Calu3 (cell line): ENCODE measurements at regions of chr2 and their contacts with region 1.

Region 1: GRCh38 chr2:193712912-193713311 is 1518.2 kb upstream of the TMEFF2 start:
- DNase-seq: no peak
- H3K4me3 Mint-ChIP-seq: no peak overlapping the region
- H3K27ac Mint-ChIP-seq: no peak overlapping the region
- H3K4me1 Mint-ChIP-seq: no peaks in the 10 kb centered on the region
- H3K27me3 Mint-ChIP-seq: no peaks in the 10 kb centered on the region
- CTCF ChIP-seq: no peak

Region 2: GRCh38 chr2:193584522-193584938 is 128.4 kb before region 1 on chr2:
- CTCF ChIA-PET with region 1: no interaction called
- intact Hi-C with region 1: no loop called
- DNase-seq: peak; percentile 15
- H3K4me3 Mint-ChIP-seq: no peak overlapping the region
- H3K27ac Mint-ChIP-seq: no peak overlapping the region
- H3K4me1 Mint-ChIP-seq: peaks cover 37% of the 10 kb centered on the region
- H3K27me3 Mint-ChIP-seq: no peaks in the 10 kb centered on the region
- CTCF ChIP-seq: peak; percentile 52

Region 3: DNA sequence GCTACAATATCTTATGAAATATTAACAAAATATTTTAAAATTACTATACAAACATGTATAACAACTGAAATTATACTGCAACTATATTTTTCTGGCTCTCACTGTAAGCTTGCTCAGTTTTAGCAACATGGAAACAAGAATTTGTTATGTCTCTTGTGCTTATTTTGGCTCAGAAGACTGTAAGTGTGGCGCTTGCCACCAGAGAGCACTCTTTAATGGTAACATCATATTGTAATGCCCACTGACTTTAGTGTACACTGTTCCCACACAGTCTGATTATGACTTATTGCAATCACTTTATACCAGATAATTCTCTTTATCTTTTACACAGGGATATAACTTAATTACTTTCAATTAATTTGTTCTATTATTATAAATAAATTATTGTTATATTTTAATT is 17.5 kb before region 1 on chr2:
- CTCF ChIA-PET with region 1: no interaction called
- intact Hi-C with region 1: no loop called
- DNase-seq: peak; percentile 19
- H3K4me3 Mint-ChIP-seq: no peak overlapping the region
- H3K27ac Mint-ChIP-seq: no peak overlapping the region
- H3K4me1 Mint-ChIP-seq: no peaks in the 10 kb centered on the region
- H3K27me3 Mint-ChIP-seq: no peaks in the 10 kb centered on the region
- CTCF ChIP-seq: peak; percentile 29

Region 4: DNA sequence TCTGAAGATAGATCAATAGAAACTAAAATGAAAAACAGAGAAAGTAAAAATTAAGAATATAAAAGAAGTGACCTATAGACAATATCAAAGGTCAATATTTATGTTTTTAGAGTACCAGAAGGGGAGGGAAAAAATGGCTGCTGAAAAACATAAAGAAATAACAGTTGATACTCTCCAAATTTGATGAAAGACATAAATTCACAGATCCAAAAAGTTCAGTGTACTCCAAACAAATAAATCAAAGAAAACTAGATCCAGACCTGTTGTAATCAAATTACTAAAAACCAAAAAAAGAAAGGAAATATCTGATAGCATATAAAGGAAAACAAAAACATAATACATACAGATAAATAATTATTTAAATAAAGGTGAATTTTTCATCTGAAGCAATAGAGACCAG is 170.9 kb after region 1 on chr2:
- CTCF ChIA-PET with region 1: no interaction called
- intact Hi-C with region 1: loop called (anchors 1 kb)
- DNase-seq: no peak
- H3K4me3 Mint-ChIP-seq: no peak overlapping the region
- H3K27ac Mint-ChIP-seq: no peak overlapping the region
- H3K4me1 Mint-ChIP-seq: no peaks in the 10 kb centered on the region
- H3K27me3 Mint-ChIP-seq: no peaks in the 10 kb centered on the region
- CTCF ChIP-seq: no peak